Heart left ventricle (tissue), 16 donors: ENCODE measurements at regions of chr17 and their contacts with region 1.

Region 1: GRCh38 chr17:55090079-55090492 is 121.5 kb downstream of the STXBP4 start:
- DNase-seq: no peak
- ATAC-seq: no peak
- H3K4me3 ChIP-seq: no peak overlapping the region
- H3K27ac ChIP-seq: peak overlapping the region in 1 of 12 donors; percentile 28
- H3K4me1 ChIP-seq: peaks cover 0 to 21% (median 0%) of the 10 kb centered on the region in 12 donors
- H3K27me3 ChIP-seq: no peaks in the 10 kb centered on the region
- CTCF ChIP-seq: no peak
- POLR2A ChIP-seq: no peak

Region 2: GRCh38 chr17:55023626-55024025 is 66.5 kb before region 1 on chr17:
- intact Hi-C with region 1: loop called in 1 of 10 experiments (anchors 10 kb)
- DNase-seq: no peak
- ATAC-seq: no peak
- H3K4me3 ChIP-seq: no peak overlapping the region
- H3K27ac ChIP-seq: no peak overlapping the region
- H3K4me1 ChIP-seq: no peaks in the 10 kb centered on the region
- H3K27me3 ChIP-seq: no peaks in the 10 kb centered on the region
- CTCF ChIP-seq: no peak
- POLR2A ChIP-seq: no peak

Region 3: GRCh38 chr17:55040611-55041010 is 49.5 kb before region 1 on chr17:
- intact Hi-C with region 1: loop called in 1 of 10 experiments (anchors 10 kb)
- DNase-seq: no peak
- ATAC-seq: no peak
- H3K4me3 ChIP-seq: no peak overlapping the region
- H3K27ac ChIP-seq: no peak overlapping the region
- H3K4me1 ChIP-seq: no peaks in the 10 kb centered on the region
- H3K27me3 ChIP-seq: no peaks in the 10 kb centered on the region
- CTCF ChIP-seq: no peak
- POLR2A ChIP-seq: no peak

Region 4: GRCh38 chr17:55152236-55152635 is 62.1 kb after region 1 on chr17:
- intact Hi-C with region 1: no loop called
- DNase-seq: no peak
- ATAC-seq: no peak
- H3K4me3 ChIP-seq: no peak overlapping the region
- H3K27ac ChIP-seq: no peak overlapping the region
- H3K4me1 ChIP-seq: peaks cover 0 to 11% (median 0%) of the 10 kb centered on the region in 12 donors
- H3K27me3 ChIP-seq: no peaks in the 10 kb centered on the region
- CTCF ChIP-seq: no peak
- POLR2A ChIP-seq: no peak